ENCODE measurements at regions of chr4 and their contacts with region 1.

Region 1: DNA sequence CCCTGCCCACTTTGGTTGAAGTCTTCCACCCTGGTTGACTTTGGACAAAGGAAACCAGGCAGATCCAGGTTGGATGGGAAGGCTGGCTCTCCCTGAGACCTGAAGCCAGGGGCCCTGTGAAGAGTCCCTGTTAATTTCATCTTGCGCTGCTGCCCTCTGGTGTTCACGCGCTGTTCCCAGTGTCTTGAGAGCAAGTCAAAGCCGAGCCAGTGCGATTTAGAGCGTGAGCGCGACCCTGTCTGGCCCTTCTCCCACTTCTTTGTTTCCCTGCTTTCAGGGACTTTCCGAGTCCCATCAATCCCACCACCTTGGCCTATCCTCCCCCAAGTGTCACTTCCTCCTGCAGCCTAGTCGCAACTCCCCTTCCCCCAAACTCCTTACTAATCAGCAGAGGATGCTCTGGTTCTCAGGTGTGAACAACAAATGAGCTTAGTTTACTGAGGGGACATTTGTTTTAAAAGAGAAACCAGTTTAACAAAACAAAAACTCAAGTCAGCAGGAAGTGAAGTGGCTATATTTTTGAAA is 25.8 kb upstream of the CHRNA9 start:
- DNase-seq: peak; percentile 84 to 97 (median 92)
- ATAC-seq: peak; percentile 55
- H3K4me3 ChIP-seq: peak overlapping the region; percentile 28 to 38
- H3K4me3 Mint-ChIP-seq: peak overlapping the region; percentile 74
- H3K27ac ChIP-seq: peak overlapping the region; percentile 71 to 96
- H3K27ac Mint-ChIP-seq: peak overlapping the region; percentile 99
- H3K4me1 ChIP-seq: peaks cover 78% of the 10 kb centered on the region
- H3K4me1 Mint-ChIP-seq: peaks cover 82% of the 10 kb centered on the region
- H3K27me3 ChIP-seq: no peaks in the 10 kb centered on the region
- H3K27me3 Mint-ChIP-seq: no peaks in the 10 kb centered on the region
- CTCF ChIP-seq: peak; percentile 86

Region 2: DNA sequence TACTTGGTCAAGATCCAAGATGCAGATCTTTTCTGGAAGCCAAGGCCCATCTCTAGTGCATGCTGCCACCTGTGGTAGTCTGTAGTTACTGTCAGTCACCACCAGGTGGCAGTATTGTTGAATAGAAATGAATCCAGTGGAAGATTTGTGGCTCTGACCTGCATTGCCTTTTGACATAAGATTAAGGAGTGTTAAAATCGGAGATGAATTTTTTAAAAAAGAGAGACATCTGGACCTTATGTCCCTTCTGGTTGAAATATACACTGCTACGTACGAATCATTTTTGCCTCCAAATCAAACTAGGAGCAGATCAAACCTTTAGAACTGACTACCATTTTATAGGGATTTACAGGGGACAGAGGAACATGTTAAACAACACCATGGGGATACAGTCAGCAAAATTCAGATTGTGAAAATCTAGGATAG is 159.3 kb before region 1 on chr4:
- CTCF ChIA-PET with region 1: interaction called, 53 read pairs
- POLR2A ChIA-PET with region 1: interaction called, 7 read pairs
- intact Hi-C with region 1: loop called (anchors 1 to 2 kb)
- DNase-seq: peak; percentile 46 to 88 (median 75)
- ATAC-seq: peak; percentile 94
- H3K4me3 ChIP-seq: no peak overlapping the region
- H3K4me3 Mint-ChIP-seq: no peak overlapping the region
- H3K27ac ChIP-seq: no peak overlapping the region
- H3K27ac Mint-ChIP-seq: peak overlapping the region; percentile 81
- H3K4me1 ChIP-seq: peaks cover 36% of the 10 kb centered on the region
- H3K4me1 Mint-ChIP-seq: peaks cover 35% of the 10 kb centered on the region
- H3K27me3 ChIP-seq: no peaks in the 10 kb centered on the region
- H3K27me3 Mint-ChIP-seq: no peaks in the 10 kb centered on the region
- CTCF ChIP-seq: peak; percentile 88

Region 3: DNA sequence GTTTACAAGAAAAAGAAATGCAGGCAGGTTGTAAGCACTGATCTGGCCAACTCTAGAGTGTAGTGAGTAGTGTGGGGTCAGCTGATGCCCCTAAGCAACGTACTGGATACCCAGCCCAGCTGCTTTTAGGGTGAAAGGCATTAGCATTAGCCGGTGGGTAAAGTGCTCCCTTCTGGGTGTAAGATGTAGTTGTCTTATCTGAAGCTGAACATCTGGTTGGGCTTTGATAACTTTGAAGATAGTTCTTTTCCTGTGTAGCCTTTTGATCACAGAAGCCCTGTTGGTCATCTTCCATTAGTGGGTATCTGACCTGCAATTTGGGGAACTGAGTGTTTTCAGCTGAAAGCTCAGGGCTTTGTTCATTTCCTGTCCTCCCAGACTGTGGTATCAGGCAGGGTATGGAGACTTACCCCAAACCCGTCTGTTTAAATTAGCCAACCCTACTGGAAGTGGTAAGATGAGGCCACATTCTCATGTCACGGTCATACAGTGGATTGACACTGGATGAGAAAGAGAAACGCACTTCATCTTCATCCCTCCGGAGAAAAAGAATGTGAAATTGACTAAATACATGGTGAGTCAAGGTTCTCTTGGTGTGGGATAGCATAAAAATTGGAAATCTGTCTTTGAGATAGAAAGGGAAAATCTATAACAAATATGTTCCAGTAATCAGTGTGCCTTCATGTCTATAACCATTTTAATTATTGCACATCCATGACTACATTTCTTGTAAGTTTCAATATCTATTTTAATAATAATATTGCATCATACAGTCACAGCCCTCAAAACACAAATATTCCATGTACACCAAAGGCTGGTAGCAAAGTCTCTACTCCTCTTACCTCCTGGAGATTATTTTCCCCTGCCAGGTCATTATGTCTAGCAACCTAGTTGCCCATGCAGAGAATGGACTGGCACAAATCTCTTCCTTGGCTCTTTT is 103.8 kb before region 1 on chr4:
- CTCF ChIA-PET with region 1: interaction called, 59 read pairs
- POLR2A ChIA-PET with region 1: interaction called, 33 read pairs
- intact Hi-C with region 1: loop called in 1 of 2 experiments (anchors 5 kb)
- DNase-seq: peak in 2 of 9 experiments; percentile 56 to 71
- ATAC-seq: peak; percentile 32
- H3K4me3 ChIP-seq: peak overlapping the region; percentile 30 to 83
- H3K4me3 Mint-ChIP-seq: peak overlapping the region; percentile 97
- H3K27ac ChIP-seq: peak overlapping the region; percentile 22 to 96
- H3K27ac Mint-ChIP-seq: peak overlapping the region; percentile 92
- H3K4me1 ChIP-seq: peaks cover 47% of the 10 kb centered on the region
- H3K4me1 Mint-ChIP-seq: peaks cover 70% of the 10 kb centered on the region
- H3K27me3 ChIP-seq: no peaks in the 10 kb centered on the region
- H3K27me3 Mint-ChIP-seq: no peaks in the 10 kb centered on the region
- CTCF ChIP-seq: no peak

Region 4: DNA sequence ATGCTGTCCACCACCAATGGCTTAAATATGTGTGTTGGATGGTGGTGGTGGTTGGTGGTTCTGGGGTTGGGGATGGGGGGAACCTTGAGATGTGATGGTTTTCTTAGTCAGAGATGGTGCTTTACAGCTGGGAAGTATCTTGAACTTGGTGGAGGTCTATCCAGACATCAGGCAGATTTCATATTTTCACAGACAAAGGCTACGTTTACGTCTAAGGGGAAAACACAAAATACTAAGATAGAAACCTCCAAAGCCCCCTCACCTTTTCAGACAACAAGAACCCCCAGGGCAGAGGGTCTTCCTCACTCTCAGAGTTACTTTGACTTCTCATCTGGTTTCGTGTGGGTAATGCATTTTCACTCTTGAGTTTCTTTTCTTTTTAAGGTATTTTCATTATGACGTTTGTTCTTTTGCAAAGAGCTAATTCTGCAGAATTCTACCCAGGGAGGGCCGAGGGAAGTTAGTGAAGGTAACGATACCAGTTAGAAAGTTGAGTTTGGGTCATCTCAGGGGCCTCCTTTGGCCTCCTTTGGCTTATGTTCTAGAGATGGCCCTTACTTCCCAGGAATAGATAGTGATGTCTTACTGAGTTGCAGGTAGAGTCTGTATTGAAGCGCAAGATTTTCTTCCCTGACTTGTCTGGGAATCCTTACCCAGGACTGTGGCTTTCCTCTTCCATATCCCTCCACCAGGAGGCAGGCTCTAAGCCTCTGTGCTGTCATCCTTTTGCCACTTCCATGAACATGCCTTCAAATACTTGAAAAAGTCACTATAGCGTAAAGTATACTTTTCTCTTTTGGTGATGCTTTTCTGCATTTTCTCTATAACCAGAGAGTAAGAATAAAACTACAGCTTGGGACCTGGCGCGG is 80.6 kb before region 1 on chr4:
- CTCF ChIA-PET with region 1: interaction called, 118 read pairs
- POLR2A ChIA-PET with region 1: interaction called, 41 read pairs
- intact Hi-C with region 1: loop called in 1 of 2 experiments (anchors 2 kb)
- DNase-seq: peak in 3 of 9 experiments; percentile 35 to 65 (median 43)
- ATAC-seq: no peak
- H3K4me3 ChIP-seq: peak overlapping the region; percentile 3 to 25
- H3K4me3 Mint-ChIP-seq: peak overlapping the region; percentile 82
- H3K27ac ChIP-seq: peak overlapping the region; percentile 29 to 96
- H3K27ac Mint-ChIP-seq: peak overlapping the region; percentile 95
- H3K4me1 ChIP-seq: peaks cover 95% of the 10 kb centered on the region
- H3K4me1 Mint-ChIP-seq: peaks cover 94% of the 10 kb centered on the region
- H3K27me3 ChIP-seq: no peaks in the 10 kb centered on the region
- H3K27me3 Mint-ChIP-seq: no peaks in the 10 kb centered on the region
- CTCF ChIP-seq: peak; percentile 42

Region 5: DNA sequence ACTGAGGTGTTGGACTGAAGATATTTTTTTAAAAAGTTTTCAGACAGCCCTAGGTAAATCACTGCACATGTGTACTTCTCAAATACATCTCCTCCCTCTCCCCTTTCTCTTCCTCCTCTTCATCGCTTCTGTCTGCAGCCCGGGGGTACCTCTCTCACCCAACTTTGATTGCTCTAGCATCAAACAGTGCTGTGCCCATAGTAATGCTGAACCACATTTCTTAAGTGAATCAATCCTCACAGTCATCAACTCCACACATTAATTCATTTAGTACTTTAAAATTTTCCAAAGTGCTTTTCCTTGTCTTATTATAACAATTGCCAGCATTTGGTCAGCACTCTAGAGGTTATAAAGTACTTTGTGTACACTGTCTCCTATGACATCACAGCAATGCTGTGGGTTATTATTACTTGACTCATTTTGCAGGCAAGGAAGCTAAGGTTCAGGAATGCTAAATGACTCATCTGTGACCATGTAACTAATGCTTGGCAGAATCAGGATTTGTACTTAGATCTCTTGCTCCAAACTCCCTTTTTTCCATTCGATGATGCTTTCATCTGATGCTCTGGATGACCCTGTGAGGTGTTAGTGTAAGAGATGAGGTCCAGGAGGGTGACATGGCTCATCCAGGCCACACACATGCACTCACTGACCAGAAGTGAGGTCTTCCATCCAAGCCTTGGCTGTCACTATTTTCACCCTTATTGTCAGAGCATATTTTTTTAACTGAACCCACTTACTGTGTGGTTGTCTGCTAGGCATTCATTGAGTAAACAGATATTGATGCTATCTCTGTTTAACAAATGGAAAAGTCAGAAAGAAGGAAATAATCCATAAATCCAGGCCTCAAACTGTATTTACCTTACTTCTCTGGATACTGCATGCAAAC is 53.7 kb before region 1 on chr4:
- CTCF ChIA-PET with region 1: interaction called, 42 read pairs
- POLR2A ChIA-PET with region 1: interaction called, 6 read pairs
- intact Hi-C with region 1: no loop called
- DNase-seq: peak in 1 of 9 experiments; percentile 56
- ATAC-seq: peak; percentile 37
- H3K4me3 ChIP-seq: no peak overlapping the region
- H3K4me3 Mint-ChIP-seq: peak overlapping the region; percentile 43
- H3K27ac ChIP-seq: peak overlapping the region in 1 of 2 experiments; percentile 28
- H3K27ac Mint-ChIP-seq: peak overlapping the region; percentile 93
- H3K4me1 ChIP-seq: peaks cover 65% of the 10 kb centered on the region
- H3K4me1 Mint-ChIP-seq: peaks cover 73% of the 10 kb centered on the region
- H3K27me3 ChIP-seq: no peaks in the 10 kb centered on the region
- H3K27me3 Mint-ChIP-seq: no peaks in the 10 kb centered on the region
- CTCF ChIP-seq: no peak

Region 6: GRCh38 chr4:40283968-40284367 is 25.3 kb before region 1 on chr4:
- CTCF ChIA-PET with region 1: interaction called, 32 read pairs
- POLR2A ChIA-PET with region 1: interaction called, 15 read pairs
- intact Hi-C with region 1: loop called (anchors 1 kb)
- DNase-seq: peak; percentile 53 to 94 (median 76)
- ATAC-seq: peak; percentile 93
- H3K4me3 ChIP-seq: no peak overlapping the region
- H3K4me3 Mint-ChIP-seq: peak overlapping the region; percentile 62
- H3K27ac ChIP-seq: peak overlapping the region; percentile 27 to 89
- H3K27ac Mint-ChIP-seq: peak overlapping the region; percentile 97
- H3K4me1 ChIP-seq: peaks cover 51% of the 10 kb centered on the region
- H3K4me1 Mint-ChIP-seq: peaks cover 70% of the 10 kb centered on the region
- H3K27me3 ChIP-seq: no peaks in the 10 kb centered on the region
- H3K27me3 Mint-ChIP-seq: no peaks in the 10 kb centered on the region
- CTCF ChIP-seq: peak; percentile 54

Region 7: DNA sequence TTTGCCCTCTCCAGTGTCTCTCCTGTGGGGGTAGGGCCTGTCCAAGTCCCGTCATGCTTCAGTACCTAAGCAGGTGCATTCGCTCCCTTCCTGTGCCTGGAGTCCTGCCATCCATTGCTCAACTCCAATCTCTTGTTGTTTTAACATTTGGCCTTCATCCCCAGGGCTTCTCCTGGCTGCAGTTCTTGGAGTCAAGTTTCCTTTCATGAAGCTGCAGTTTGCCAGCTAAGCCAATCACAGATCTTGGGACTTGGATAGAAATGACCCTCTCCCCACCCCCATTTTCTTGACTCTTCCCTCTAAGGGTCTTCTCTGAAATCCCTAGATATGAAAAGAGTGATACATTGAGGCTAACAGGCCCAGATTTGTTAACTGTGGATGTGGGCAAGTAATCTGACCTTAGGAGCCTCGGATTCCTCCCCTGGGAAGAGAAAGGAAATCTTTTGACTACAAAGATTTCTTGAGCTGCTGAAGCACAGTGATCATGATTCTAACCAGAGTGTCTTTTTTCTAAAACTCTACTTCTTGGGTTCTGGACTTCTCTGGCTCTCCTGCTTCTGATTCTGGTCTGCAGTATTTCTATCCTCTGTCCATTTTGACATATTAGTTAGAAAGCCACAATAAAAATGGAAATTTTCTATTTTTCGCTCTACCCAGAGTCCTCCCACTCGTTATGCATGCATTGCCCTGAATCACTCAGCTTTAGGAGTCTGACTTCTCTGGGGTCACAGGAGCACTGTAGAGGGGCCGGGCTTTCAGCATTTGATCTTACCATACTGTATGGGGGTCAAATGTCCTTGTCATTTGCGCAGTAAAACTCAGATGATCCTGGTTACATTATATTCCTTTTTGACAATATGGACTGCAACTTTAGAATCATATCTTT is 86.8 kb after region 1 on chr4:
- CTCF ChIA-PET with region 1: no interaction called
- POLR2A ChIA-PET with region 1: no interaction called
- intact Hi-C with region 1: no loop called
- DNase-seq: no peak
- ATAC-seq: no peak
- H3K4me3 ChIP-seq: no peak overlapping the region
- H3K4me3 Mint-ChIP-seq: no peak overlapping the region
- H3K27ac ChIP-seq: no peak overlapping the region
- H3K27ac Mint-ChIP-seq: no peak overlapping the region
- H3K4me1 ChIP-seq: no peaks in the 10 kb centered on the region
- H3K4me1 Mint-ChIP-seq: no peaks in the 10 kb centered on the region
- H3K27me3 ChIP-seq: no peaks in the 10 kb centered on the region
- H3K27me3 Mint-ChIP-seq: no peaks in the 10 kb centered on the region
- CTCF ChIP-seq: no peak

Region 8: GRCh38 chr4:40409835-40410234 is 100.5 kb after region 1 on chr4:
- CTCF ChIA-PET with region 1: no interaction called
- POLR2A ChIA-PET with region 1: no interaction called
- intact Hi-C with region 1: no loop called
- DNase-seq: no peak
- ATAC-seq: no peak
- H3K4me3 ChIP-seq: no peak overlapping the region
- H3K4me3 Mint-ChIP-seq: no peak overlapping the region
- H3K27ac ChIP-seq: no peak overlapping the region
- H3K27ac Mint-ChIP-seq: no peak overlapping the region
- H3K4me1 ChIP-seq: no peaks in the 10 kb centered on the region
- H3K4me1 Mint-ChIP-seq: no peaks in the 10 kb centered on the region
- H3K27me3 ChIP-seq: no peaks in the 10 kb centered on the region
- H3K27me3 Mint-ChIP-seq: peaks cover 7% of the 10 kb centered on the region
- CTCF ChIP-seq: no peak